ENCODE measurements at regions of chr2 and their contacts with region 1.

Region 1: DNA sequence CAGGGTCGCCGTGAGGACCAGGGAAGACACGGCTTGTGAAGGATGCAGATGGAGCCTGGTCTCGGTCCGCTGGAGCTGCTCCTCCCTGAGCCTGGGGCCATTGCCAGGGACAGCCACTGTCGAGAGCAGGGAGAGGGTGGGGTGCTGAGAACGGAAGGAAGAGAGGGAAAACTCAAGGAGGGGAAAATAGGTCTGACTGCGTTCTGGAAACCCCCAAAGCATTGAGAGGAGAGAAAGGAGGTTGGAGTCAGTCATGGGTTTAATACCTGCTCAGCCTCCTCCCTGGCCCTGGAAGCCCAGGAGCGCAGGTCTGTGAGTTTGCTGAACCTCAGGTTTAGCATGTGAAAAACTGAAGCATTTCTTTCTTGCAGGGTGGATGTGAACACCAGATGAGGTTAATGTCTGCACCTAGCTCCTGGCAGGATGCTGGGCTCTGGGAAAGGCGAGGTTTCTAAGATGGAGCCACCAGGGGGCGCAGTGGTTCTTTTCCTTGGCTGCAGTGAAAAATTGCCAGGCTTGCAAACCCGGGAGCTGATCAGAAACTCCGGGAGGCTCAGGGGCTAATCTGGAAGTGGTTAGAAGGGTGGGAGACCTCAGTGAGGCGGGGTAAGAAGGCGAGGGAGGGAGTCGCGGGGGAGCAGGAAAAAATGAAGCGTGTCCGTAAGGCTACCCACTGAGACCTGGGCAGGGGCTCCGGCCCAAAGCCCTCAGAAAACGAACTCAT is 33.6 kb upstream of the RNF149 start:
- DNase-seq: peak; percentile 70
- ATAC-seq: peak; percentile 81
- H3K4me3 ChIP-seq: peak overlapping the region in 1 of 3 experiments; percentile 41; a peak in 1 of 6 replicates
- H3K27ac ChIP-seq: no peak overlapping the region
- H3K4me1 ChIP-seq: peaks cover 50% of the 10 kb centered on the region
- H3K27me3 ChIP-seq: no peaks in the 10 kb centered on the region
- CTCF ChIP-seq: peak; percentile 93
- EP300 ChIP-seq: no peak
- POLR2A ChIP-seq: no peak
- RAD21 ChIP-seq: peak; percentile 83

Region 2: GRCh38 chr2:101135412-101136296 is 206.4 kb before region 1 on chr2:
- CTCF ChIA-PET with region 1: no interaction called
- POLR2A ChIA-PET with region 1: no interaction called
- in situ Hi-C with region 1: no loop called
- intact Hi-C with region 1: no loop called
- DNase-seq: peak; percentile 52
- ATAC-seq: peak; percentile 88
- H3K4me3 ChIP-seq: no peak overlapping the region
- H3K27ac ChIP-seq: peak overlapping the region; percentile 12
- H3K4me1 ChIP-seq: peaks cover 42% of the 10 kb centered on the region
- H3K27me3 ChIP-seq: no peaks in the 10 kb centered on the region
- CTCF ChIP-seq: no peak
- EP300 ChIP-seq: no peak
- POLR2A ChIP-seq: 0 out of 4 replicates have a peak, but pooled peaks of 1 of the 2 experiments have one; percentile 11
- RAD21 ChIP-seq: no peak

Region 3: DNA sequence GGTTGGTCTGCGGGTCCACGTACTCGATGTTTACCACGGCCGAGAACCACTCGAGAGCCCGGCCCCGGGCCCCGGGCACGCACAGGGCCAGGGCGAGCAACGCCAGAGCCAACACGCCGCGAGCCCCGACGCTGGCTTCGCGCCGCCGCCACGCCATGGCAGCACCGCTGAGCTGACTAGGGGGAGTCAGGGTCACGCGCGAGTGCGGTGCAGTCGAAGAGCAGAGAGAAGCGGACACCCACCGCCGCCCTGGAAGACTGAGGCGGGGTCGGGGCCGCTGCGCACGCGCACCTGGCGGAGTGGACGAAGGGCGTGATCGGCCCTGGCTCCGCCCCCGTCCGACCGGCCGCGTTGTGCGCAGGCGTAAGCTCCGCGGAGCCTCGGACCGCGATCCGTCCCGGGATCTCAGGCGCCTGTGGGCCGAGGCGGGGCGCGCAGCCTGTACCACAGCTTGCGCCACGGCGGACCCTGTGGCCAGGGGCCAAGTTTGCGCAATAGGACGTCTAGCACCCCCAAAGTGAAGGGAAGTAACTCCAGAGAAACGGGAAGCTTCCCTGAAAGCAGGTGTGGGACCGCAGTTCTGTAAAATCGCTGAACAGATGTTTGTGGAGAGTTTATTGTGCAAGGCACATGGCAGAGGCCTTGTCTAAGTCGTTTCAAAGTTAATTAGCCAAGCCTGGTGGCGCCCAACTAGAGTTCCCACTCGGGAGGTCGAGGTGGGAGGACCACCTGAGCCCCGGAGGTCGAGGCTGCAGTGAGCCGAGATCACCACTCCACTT is 33.4 kb before region 1 on chr2 and contains the start of gene RNF149:
- CTCF ChIA-PET with region 1: no interaction called
- POLR2A ChIA-PET with region 1: interaction called, 8 read pairs
- in situ Hi-C with region 1: no loop called
- intact Hi-C with region 1: loop called (anchors 5 kb)
- DNase-seq: peak; percentile 88
- ATAC-seq: peak; percentile 86
- H3K4me3 ChIP-seq: peak within 1 kb of the TSS; percentile 76 to 95 (median 93)
- H3K27ac ChIP-seq: peak within 1 kb of the TSS; percentile 85
- H3K4me1 ChIP-seq: peaks cover 65% of the 10 kb centered on the region
- H3K27me3 ChIP-seq: no peaks in the 10 kb centered on the region; a peak in 1 of 5 replicates
- CTCF ChIP-seq: peak; percentile 48
- EP300 ChIP-seq: peak; percentile 76 to 82
- POLR2A ChIP-seq: peak; percentile 90 to 98
- RAD21 ChIP-seq: peak; percentile 49
- total RNA-seq, gene RNF149: 45.7 and 109 TPM in 2 replicates

Region 4: GRCh38 chr2:101387151-101387807 is 45.2 kb after region 1 on chr2 and contains the start of gene CREG2:
- CTCF ChIA-PET with region 1: interaction called, 10 read pairs
- POLR2A ChIA-PET with region 1: no interaction called
- in situ Hi-C with region 1: loop called (anchors 5 kb)
- intact Hi-C with region 1: loop called (anchors 1 kb)
- DNase-seq: peak; percentile 40
- ATAC-seq: peak; percentile 94
- H3K4me3 ChIP-seq: peak within 1 kb of the TSS; percentile 67 to 88 (median 71)
- H3K27ac ChIP-seq: no peak within 1 kb of the TSS
- H3K4me1 ChIP-seq: peaks cover 18% of the 10 kb centered on the region
- H3K27me3 ChIP-seq: peaks cover 4 to 72% of the 10 kb centered on the region in 2 experiments; a peak in 4 of 5 replicates
- CTCF ChIP-seq: peak; percentile 69
- EP300 ChIP-seq: no peak
- POLR2A ChIP-seq: no peak
- RAD21 ChIP-seq: peak; percentile 95
- total RNA-seq, gene CREG2: 0.18 TPM in 1 of 2 replicates, not detected in the other

Region 5: DNA sequence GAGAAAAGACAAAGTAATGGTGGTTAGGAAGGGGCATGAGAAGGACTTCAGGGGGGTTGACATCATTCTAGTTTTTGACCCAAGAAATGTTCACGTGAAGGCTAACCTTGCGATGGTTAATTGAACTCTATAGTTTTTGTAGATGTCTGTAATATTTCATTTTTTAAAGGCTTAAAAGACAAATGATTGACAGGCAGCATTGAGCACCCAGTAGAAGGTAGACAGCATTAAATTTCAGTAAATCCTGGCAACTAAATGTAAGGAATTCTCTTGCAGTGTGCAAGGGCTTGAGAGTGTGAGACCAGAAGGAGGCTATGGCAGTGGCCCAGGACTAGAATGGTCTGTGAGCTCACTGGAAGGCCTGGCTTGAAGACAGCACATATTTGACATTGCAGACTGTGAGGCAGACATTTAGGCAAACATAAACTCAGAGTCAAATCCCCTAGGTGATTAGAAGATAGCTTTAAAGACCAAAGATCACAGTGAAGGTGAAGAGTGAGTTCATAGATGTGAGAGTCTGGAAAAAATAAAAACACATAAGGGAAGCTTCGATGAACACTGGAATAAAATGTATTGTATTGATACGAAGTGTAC is 255.4 kb after region 1 on chr2:
- CTCF ChIA-PET with region 1: no interaction called
- POLR2A ChIA-PET with region 1: no interaction called
- in situ Hi-C with region 1: no loop called
- intact Hi-C with region 1: loop called (anchors 10 kb)
- DNase-seq: peak; percentile 92
- ATAC-seq: peak; percentile 99
- H3K4me3 ChIP-seq: no peak overlapping the region
- H3K27ac ChIP-seq: no peak overlapping the region
- H3K4me1 ChIP-seq: peaks cover 25% of the 10 kb centered on the region
- H3K27me3 ChIP-seq: no peaks in the 10 kb centered on the region
- CTCF ChIP-seq: no peak
- EP300 ChIP-seq: peak in 1 of 2 experiments; percentile 82; a peak in 2 of 4 replicates
- POLR2A ChIP-seq: no peak
- RAD21 ChIP-seq: 0 out of 2 replicates have a peak, but pooled peaks have one; percentile 21

Region 6: DNA sequence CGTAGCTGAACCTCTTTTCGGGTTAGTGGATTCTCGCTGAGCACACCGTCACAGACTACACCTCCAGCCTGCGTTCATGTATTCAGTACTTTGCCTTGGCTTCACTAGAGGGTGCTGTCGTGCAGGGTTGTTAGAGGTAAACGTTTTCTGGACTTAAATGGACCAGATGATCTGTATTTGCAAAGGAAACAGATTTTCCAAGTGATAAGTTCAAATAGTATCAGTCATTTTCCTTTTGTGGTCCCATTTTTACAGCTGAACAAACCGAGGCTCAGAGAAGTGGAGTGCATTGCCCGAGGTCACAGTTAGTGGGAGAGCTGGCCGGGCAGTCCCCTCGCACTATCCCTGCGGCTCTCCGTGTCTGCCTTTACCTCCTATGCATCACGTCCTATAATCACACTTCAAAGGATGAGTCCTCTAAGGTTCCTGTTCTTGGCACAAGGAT is 481.3 kb after region 1 on chr2:
- CTCF ChIA-PET with region 1: no interaction called
- POLR2A ChIA-PET with region 1: no interaction called
- in situ Hi-C with region 1: no loop called
- intact Hi-C with region 1: loop called (anchors 10 kb)
- DNase-seq: peak; percentile 71
- ATAC-seq: peak; percentile 80
- H3K4me3 ChIP-seq: no peak overlapping the region
- H3K27ac ChIP-seq: peak overlapping the region; percentile 31
- H3K4me1 ChIP-seq: peaks cover 70% of the 10 kb centered on the region
- H3K27me3 ChIP-seq: no peaks in the 10 kb centered on the region
- CTCF ChIP-seq: peak; percentile 87
- EP300 ChIP-seq: no peak
- POLR2A ChIP-seq: no peak
- RAD21 ChIP-seq: peak; percentile 47; the same call in 1 of the 2 replicates